A673 (cell line): ENCODE measurements at regions of chr3 and their contacts with region 1.

Region 1: GRCh38 chr3:47852604-47853602 is 50.0 kb downstream of the DHX30 start:
- DNase-seq: no peak
- H3K4me3 ChIP-seq: no peak overlapping the region
- H3K27ac ChIP-seq: no peak overlapping the region
- H3K4me1 ChIP-seq: no peaks in the 10 kb centered on the region
- H3K27me3 ChIP-seq: no peaks in the 10 kb centered on the region
- CTCF ChIP-seq: no peak

Region 2: DNA sequence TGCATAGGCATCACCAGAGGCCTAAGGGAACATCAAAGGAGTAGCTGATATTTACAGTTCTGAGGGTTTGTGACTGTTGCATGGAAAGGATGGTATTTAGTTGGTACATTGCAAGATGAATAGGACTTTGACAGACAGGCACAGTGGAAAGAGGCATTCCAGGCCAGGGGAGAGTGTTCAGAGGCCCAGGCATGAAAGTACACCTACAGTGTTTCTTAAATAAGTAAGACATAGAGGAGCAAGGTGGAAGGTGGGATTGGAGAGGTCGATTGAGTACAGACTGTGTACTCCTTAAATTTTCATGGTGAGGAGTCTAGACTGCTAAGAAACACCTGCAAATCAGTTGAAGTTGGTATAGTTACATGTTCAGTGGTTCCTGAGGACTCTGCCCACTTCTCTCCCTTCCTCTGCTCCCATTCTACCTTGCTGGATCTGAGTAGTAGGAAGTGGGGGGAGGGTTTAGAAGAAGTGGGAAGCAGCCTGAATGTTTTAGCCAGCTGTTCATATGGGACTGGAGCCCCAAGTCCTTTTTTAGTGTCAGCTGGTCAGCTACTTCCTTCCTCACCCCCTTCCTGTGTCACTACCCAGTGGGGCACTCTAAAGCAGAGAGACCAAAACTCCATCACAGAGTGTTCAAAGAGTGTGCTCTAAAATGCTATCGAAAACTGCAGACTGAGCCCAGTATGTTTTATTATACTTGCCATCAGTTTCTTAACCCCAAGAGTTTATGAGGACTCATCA is 556.2 kb before region 1 on chr3:
- CTCF ChIA-PET with region 1: no interaction called
- POLR2A ChIA-PET with region 1: interaction called, 16 read pairs
- intact Hi-C with region 1: no loop called
- DNase-seq: no peak
- H3K4me3 ChIP-seq: no peak overlapping the region
- H3K27ac ChIP-seq: no peak overlapping the region
- H3K4me1 ChIP-seq: no peaks in the 10 kb centered on the region
- H3K27me3 ChIP-seq: no peaks in the 10 kb centered on the region
- CTCF ChIP-seq: no peak

Region 3: GRCh38 chr3:47824541-47825473 is 28.1 kb before region 1 on chr3:
- CTCF ChIA-PET with region 1: no interaction called
- POLR2A ChIA-PET with region 1: no interaction called
- intact Hi-C with region 1: no loop called
- DNase-seq: peak; percentile 81
- H3K4me3 ChIP-seq: peak overlapping the region; percentile 81
- H3K27ac ChIP-seq: peak overlapping the region; percentile 88
- H3K4me1 ChIP-seq: peaks cover 16% of the 10 kb centered on the region
- H3K27me3 ChIP-seq: no peaks in the 10 kb centered on the region
- CTCF ChIP-seq: peak; percentile 57

Region 4: DNA sequence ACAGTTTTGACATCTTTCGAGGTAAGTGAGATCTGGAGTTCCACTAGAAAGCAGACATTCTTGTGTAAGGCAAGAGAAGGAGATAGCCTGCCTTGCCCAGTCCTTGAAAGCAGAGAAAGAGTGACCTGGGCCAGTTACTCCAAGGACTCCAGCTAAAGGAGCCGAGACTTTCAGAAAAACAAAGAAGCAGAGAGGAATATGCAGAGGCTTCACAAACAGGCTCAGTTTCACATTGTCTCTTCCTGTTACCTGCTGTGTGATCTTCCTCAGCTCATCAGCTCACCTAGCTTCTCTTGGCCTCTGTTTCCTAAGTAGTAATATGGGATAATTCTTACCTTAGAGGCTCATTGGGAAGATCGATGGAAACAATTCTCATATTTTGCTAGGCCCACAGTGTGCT is 254.3 kb after region 1 on chr3:
- CTCF ChIA-PET with region 1: no interaction called
- POLR2A ChIA-PET with region 1: no interaction called
- intact Hi-C with region 1: no loop called
- DNase-seq: no peak
- H3K4me3 ChIP-seq: no peak overlapping the region
- H3K27ac ChIP-seq: no peak overlapping the region
- H3K4me1 ChIP-seq: no peaks in the 10 kb centered on the region
- H3K27me3 ChIP-seq: no peaks in the 10 kb centered on the region
- CTCF ChIP-seq: no peak